Tibial artery (tissue), 4 donors: ENCODE measurements at regions of chr11 and their contacts with region 1.

Region 1: DNA sequence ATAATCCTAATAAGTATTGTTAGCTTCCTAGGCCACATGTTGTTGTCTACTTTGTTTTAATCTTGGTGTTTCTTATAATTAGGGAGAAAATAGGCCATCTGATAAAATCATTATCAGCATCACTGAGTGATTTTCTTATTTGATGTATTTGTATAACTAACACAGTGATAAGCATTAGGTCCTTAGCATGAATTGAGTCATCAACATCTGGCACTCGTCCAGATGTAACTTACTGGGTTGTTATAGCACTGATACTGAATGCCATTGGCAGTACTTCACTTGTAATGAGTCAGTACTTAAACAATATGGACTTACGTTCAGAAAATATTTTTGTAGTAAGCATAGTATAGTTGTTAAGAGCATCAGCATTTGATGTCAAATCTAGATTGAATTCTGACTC is 16.2 kb downstream of the API5 start:
- DNase-seq: no peak
- H3K4me3 ChIP-seq: no peak overlapping the region
- H3K27ac ChIP-seq: no peak overlapping the region
- H3K4me1 ChIP-seq: no peaks in the 10 kb centered on the region
- H3K27me3 ChIP-seq: no peaks in the 10 kb centered on the region
- CTCF ChIP-seq: no peak

Region 2: GRCh38 chr11:43222215-43222614 is 105.8 kb before region 1 on chr11:
- intact Hi-C with region 1: no loop called
- DNase-seq: no peak
- H3K4me3 ChIP-seq: no peak overlapping the region
- H3K27ac ChIP-seq: no peak overlapping the region
- H3K4me1 ChIP-seq: no peaks in the 10 kb centered on the region
- H3K27me3 ChIP-seq: no peaks in the 10 kb centered on the region
- CTCF ChIP-seq: no peak

Region 3: DNA sequence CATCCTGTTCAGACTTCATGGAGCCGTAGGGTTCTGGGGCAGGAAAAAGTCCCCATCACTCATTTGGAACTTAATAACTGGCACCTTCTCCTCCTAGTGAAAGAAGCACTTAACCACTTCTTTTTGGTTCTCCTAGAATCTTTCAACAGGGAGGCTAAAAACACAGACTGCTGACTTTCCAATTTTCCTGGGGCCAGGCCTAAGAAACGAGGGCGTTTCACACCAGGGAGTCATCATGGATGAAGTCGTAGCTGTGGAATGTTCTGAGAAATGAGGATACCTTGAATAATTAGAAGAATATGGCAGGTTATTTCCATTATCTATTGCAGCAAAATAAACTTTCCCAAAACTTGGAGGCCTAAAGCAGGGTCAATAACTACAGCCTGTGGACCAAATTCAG is 42.2 kb before region 1 on chr11:
- intact Hi-C with region 1: no loop called
- DNase-seq: no peak
- H3K4me3 ChIP-seq: no peak overlapping the region
- H3K27ac ChIP-seq: no peak overlapping the region
- H3K4me1 ChIP-seq: no peaks in the 10 kb centered on the region
- H3K27me3 ChIP-seq: peaks cover 0 to 25% of the 10 kb centered on the region in 2 donors
- CTCF ChIP-seq: no peak

Region 4: DNA sequence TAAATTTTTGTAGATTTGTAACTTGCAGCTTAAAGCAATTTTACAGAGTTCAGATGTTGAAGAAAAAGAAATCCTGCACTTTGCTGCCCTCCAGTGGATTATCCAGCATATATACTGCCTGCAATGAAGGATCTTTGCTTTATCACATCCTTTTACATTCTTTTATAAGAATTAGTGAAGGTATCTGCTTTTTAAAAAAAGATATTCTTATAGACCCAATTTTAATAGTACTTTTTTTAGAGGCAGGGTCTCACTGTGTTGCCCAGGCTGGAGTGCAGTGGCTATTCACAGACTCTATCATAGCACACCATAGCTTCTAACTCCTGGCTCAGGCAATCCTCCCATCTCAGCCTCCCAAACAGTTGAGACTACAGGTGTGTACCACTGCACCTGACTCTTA is 91.5 kb after region 1 on chr11:
- intact Hi-C with region 1: loop called (anchors 10 kb)
- DNase-seq: no peak
- H3K4me3 ChIP-seq: no peak overlapping the region
- H3K27ac ChIP-seq: no peak overlapping the region
- H3K4me1 ChIP-seq: no peaks in the 10 kb centered on the region
- H3K27me3 ChIP-seq: no peaks in the 10 kb centered on the region
- CTCF ChIP-seq: peak; percentile 32 to 48

Region 5: DNA sequence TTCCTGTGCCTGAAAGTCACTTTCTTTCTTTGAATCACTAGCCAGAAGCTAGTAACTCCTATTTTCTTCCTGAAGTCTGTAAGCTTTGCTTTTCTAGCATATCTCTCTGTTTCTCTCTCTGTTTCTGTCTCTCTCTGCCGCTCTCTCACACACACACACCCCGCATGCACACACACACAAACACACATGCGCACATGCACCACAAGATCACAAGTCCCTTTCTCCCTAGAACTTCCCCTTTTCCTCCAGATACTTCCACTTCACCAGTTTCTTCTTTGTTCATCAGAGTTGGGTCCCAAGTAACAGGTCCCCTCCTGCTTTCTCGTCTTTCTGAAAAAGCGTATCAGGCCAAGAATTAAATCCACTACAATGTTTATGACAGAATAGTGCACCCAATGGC is 204.1 kb after region 1 on chr11:
- intact Hi-C with region 1: no loop called
- DNase-seq: no peak
- H3K4me3 ChIP-seq: no peak overlapping the region
- H3K27ac ChIP-seq: no peak overlapping the region
- H3K4me1 ChIP-seq: no peaks in the 10 kb centered on the region
- H3K27me3 ChIP-seq: peaks cover 0 to 8% of the 10 kb centered on the region in 2 donors
- CTCF ChIP-seq: no peak